IMR-90 (cell line): ENCODE measurements at regions of chr2 and their contacts with region 1.

Region 1: GRCh38 chr2:120680136-120680761 is 55.4 kb upstream of the GLI2 start:
- DNase-seq: peak; percentile 88
- ATAC-seq: peak; percentile 67
- H3K4me3 ChIP-seq: no peak overlapping the region
- H3K27ac ChIP-seq: no peak overlapping the region
- H3K4me1 ChIP-seq: peaks cover 18% of the 10 kb centered on the region
- H3K27me3 ChIP-seq: peaks cover 12% of the 10 kb centered on the region
- CTCF ChIP-seq: peak; percentile 78
- POLR2A ChIP-seq: peak; percentile 40; the same call in 1 of the 2 replicates
- RAD21 ChIP-seq: peak; percentile 92

Region 2: DNA sequence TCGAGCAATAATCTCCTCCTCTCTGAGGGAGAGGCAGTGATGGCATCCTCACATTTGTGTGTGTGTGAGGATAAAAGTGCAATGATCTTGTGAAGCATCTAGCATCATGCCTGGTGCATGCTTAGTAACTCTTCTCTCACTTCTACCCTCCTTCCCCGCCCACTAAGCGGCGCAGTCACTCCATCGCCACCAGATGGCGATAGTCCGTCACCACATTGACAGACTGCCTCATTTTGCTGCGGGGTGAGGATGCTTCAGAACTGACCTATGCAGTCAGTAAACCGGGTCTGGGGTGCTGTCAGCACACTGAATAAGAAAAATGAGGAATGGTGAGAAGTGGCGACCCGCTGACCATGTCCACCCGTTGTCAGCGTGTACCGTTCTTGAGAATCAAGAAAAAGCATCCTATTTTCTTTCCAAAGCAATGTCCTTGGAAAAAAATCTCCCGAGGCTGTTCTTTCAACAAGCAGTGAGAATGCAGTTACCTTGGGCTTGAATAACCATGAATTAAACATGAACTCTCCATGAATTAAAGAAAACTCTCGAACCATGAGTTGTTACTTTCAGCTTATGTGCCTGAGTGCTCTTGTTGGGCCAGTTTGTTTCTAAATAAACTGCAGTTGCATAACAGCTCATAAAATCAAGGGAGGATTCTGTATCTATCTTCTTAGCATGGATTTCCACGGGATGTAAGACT is 1038.5 kb before region 1 on chr2:
- CTCF ChIA-PET with region 1: no interaction called
- POLR2A ChIA-PET with region 1: interaction called, 9 read pairs
- dilution Hi-C with region 1: no loop called
- in situ Hi-C with region 1: no loop called
- intact Hi-C with region 1: loop called (anchors 5 kb)
- DNase-seq: peak; percentile 71
- ATAC-seq: peak; percentile 96
- H3K4me3 ChIP-seq: no peak overlapping the region
- H3K27ac ChIP-seq: no peak overlapping the region
- H3K4me1 ChIP-seq: no peaks in the 10 kb centered on the region
- H3K27me3 ChIP-seq: peaks cover 21% of the 10 kb centered on the region
- CTCF ChIP-seq: peak; percentile 94
- POLR2A ChIP-seq: no peak
- RAD21 ChIP-seq: peak; percentile 86

Region 3: DNA sequence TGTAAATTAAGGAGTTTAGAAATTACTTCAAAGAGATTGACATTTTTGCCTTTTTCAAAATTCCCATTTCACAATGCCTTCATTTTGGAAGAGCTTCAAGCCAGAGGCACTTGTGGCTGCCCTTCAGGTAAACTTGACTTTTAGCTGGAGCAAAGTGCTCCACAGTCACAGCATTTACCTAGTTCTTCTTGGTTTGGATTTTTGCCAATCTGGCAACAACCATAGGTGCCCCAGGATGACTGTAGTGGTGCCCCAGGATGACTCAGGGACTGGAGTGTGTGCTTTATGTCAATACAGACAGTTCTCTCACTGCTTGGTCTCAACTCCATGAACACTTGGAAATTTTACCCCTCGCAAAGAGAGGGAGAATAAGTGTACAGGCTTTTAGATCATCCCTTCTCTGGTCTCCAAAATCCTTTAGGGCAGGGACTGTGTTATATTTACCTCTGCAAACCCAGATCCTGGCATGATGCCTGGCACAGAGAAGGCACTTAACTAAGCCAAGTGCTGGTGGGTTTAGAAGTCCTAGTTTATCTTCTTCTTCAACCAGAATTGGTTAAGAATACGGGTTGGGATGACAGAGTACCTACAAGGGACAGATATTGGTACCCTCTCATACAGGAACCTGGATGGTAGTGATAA is 935.8 kb before region 1 on chr2:
- CTCF ChIA-PET with region 1: no interaction called
- POLR2A ChIA-PET with region 1: no interaction called
- dilution Hi-C with region 1: no loop called
- in situ Hi-C with region 1: loop called (anchors 25 kb)
- intact Hi-C with region 1: no loop called
- DNase-seq: peak; percentile 18
- ATAC-seq: no peak
- H3K4me3 ChIP-seq: no peak overlapping the region
- H3K27ac ChIP-seq: no peak overlapping the region
- H3K4me1 ChIP-seq: peaks cover 1% of the 10 kb centered on the region
- H3K27me3 ChIP-seq: peaks cover 21% of the 10 kb centered on the region
- CTCF ChIP-seq: no peak
- POLR2A ChIP-seq: no peak
- RAD21 ChIP-seq: no peak

Region 4: DNA sequence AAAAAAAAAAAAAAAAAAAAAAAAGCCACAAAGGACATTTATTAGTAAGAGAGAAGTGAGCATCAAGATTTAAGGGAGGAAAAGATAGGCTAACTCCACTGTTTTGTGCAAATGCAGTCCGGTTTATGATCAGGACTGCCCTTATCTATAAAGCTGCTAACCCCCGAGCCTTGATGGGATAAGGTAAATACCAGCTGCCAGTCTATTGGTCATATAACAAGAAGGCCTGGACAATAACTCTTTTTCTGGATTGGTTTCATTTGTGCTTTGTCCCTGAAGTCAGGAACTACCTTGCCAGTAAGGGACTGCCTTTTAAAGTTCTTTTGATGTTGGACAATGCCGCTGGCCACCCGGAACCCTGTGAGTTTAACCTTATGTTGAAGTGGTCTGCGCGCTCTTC is 905.1 kb before region 1 on chr2:
- CTCF ChIA-PET with region 1: no interaction called
- POLR2A ChIA-PET with region 1: interaction called, 11 read pairs
- dilution Hi-C with region 1: no loop called
- in situ Hi-C with region 1: no loop called
- intact Hi-C with region 1: no loop called
- DNase-seq: no peak
- ATAC-seq: no peak
- H3K4me3 ChIP-seq: no peak overlapping the region
- H3K27ac ChIP-seq: no peak overlapping the region
- H3K4me1 ChIP-seq: 0 out of 2 replicates have a peak, but pooled peaks cover 1% of the 10 kb centered on the region
- H3K27me3 ChIP-seq: no peaks in the 10 kb centered on the region
- CTCF ChIP-seq: no peak
- POLR2A ChIP-seq: no peak
- RAD21 ChIP-seq: no peak

Region 5: DNA sequence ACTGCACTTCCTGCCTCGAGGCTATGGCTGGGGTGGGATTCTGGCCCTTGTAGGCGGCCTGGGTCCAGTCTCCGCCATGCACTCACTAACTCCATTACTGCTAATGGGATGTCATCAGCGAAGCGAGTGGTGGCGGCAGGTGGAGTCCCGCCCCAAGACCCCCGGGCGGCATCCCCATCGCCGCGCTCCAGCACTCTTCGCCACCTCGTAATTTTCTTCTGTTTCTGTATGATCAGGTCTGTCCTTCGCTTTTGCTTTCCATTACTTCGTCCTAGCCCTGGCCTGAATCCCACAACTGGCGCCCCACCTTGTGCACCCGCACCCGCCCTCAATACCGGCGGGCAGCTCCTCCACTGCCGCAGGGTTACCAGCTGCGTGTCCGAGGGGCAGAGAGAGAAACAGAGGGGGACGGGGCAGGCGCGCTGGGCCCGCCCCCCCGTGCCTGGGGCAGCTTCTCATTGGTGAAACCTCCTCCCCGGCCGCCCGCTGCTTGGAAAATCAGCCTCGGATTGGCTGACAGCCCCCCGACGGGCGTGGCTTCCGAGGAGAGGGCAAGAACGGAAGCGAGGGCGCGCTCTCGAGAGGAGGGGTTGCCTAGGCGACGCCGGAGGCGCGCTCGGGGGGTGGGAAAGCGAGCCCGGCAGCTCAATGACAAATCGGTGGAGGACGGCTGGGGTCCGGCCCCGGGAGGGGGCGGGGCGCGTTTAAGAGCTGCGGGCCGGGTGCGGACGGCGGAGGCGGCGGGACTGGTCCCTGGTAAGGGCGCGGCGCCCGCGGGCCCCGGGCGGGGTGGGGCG is 427.8 kb before region 1 on chr2 and contains the start of gene RALB:
- CTCF ChIA-PET with region 1: interaction called, 3 read pairs
- POLR2A ChIA-PET with region 1: no interaction called
- dilution Hi-C with region 1: no loop called
- in situ Hi-C with region 1: no loop called
- intact Hi-C with region 1: loop called (anchors 5 kb)
- DNase-seq: peak; percentile 97
- ATAC-seq: peak; percentile 94
- H3K4me3 ChIP-seq: peak within 1 kb of the TSS; percentile 74
- H3K27ac ChIP-seq: peak within 1 kb of the TSS; percentile 80
- H3K4me1 ChIP-seq: peaks cover 5% of the 10 kb centered on the region; the same call in 1 of the 2 replicates
- H3K27me3 ChIP-seq: peaks cover 11% of the 10 kb centered on the region; the same call in 1 of the 2 replicates
- CTCF ChIP-seq: no peak
- POLR2A ChIP-seq: peak; percentile 54
- RAD21 ChIP-seq: no peak
- total RNA-seq, gene RALB: 53.6 and 75.3 TPM in 2 replicates

Region 6: GRCh38 chr2:120343433-120344105 is 336.7 kb before region 1 on chr2:
- CTCF ChIA-PET with region 1: interaction called, 34 read pairs
- POLR2A ChIA-PET with region 1: no interaction called
- dilution Hi-C with region 1: no loop called
- in situ Hi-C with region 1: loop called (anchors 5 kb)
- intact Hi-C with region 1: loop called (anchors 1 kb)
- DNase-seq: peak; percentile 68
- ATAC-seq: peak; percentile 84
- H3K4me3 ChIP-seq: no peak overlapping the region
- H3K27ac ChIP-seq: no peak overlapping the region
- H3K4me1 ChIP-seq: peaks cover 6% of the 10 kb centered on the region; the same call in 1 of the 2 replicates
- H3K27me3 ChIP-seq: peaks cover 90% of the 10 kb centered on the region
- CTCF ChIP-seq: peak; percentile 92
- POLR2A ChIP-seq: no peak
- RAD21 ChIP-seq: peak; percentile 97

Region 7: DNA sequence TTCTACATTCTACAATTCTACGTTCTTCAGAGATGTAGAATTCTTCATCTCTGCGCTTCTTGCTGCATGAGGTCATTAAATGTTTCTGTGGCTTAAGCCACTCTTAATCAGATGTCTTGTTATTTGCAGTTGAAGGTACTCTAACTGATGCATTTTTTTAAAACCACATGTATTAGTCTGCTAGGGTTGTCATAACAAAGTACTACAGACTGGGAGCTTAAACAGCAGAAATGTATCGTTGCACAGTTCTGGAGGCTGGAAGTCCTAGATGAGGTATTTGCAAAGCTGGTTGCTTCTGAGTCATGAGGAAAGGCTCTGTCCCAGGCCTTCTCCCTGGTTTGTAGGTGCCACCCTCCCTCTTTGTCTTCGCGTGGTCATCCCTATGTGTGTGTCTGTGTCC is 120.8 kb before region 1 on chr2:
- CTCF ChIA-PET with region 1: no interaction called
- POLR2A ChIA-PET with region 1: no interaction called
- dilution Hi-C with region 1: no loop called
- in situ Hi-C with region 1: no loop called
- intact Hi-C with region 1: loop called (anchors 5 kb)
- DNase-seq: peak; percentile 100
- ATAC-seq: peak; percentile 96
- H3K4me3 ChIP-seq: no peak overlapping the region
- H3K27ac ChIP-seq: peak overlapping the region; percentile 99
- H3K4me1 ChIP-seq: peaks cover 33% of the 10 kb centered on the region
- H3K27me3 ChIP-seq: peaks cover under 1% of the 10 kb centered on the region; the same call in 1 of the 2 replicates
- CTCF ChIP-seq: no peak
- POLR2A ChIP-seq: no peak
- RAD21 ChIP-seq: peak; percentile 24; the same call in 1 of the 2 replicates

Region 8: GRCh38 chr2:120703330-120703994 is 23.2 kb after region 1 on chr2:
- CTCF ChIA-PET with region 1: no interaction called
- POLR2A ChIA-PET with region 1: no interaction called
- dilution Hi-C with region 1: no loop called
- in situ Hi-C with region 1: no loop called
- intact Hi-C with region 1: no loop called
- DNase-seq: peak; percentile 91
- ATAC-seq: peak; percentile 93
- H3K4me3 ChIP-seq: no peak overlapping the region
- H3K27ac ChIP-seq: peak overlapping the region; percentile 44; the same call in 1 of the 2 replicates
- H3K4me1 ChIP-seq: peaks cover 4% of the 10 kb centered on the region
- H3K27me3 ChIP-seq: no peaks in the 10 kb centered on the region
- CTCF ChIP-seq: no peak
- POLR2A ChIP-seq: no peak
- RAD21 ChIP-seq: no peak

Region 9: DNA sequence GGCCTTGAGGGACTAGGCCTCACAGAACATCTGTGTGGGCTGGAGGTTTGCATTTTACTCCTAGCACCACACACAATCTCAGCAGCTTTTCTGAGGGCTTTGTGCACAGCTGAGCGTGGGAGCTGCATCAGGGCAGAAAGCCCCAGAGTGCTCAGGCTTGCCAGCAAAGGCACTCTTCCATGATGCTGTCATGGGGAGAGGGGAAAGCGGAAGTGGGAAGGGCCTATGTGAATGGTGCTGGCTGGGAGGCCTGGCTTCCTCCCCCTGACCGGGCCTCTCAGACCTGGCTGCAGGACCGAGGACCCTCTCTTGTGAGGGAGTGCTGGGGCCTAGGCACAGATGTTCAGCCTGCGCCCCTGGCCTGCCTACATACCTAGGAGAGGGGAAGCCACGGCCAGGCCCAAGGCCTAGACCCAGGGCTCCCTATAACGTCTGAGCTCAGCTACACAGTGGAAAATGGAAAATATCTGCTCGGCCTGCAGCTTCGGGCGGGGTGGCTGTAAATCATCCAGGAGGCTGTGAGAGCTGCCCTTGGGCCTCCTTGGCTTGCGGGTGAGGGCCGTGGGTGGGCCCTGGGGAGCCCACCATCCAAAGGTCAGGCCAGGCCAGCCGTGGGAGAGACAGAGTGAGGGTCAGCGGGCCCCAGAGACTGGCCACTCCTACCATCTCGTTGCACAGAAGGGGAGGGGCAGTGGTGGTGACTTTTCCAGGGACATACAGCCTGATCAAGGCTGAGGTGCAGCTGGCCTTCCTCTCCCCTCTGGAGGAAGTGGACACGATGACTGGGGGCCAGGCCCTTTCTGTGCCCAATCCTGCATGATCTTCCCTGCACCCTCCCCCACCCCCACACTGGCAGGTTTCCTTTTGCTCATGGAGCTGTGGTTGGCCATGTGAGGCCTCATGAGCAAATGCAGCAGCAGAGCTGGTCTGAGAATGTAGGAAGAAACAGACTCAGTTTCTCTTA is 78.2 kb after region 1 on chr2:
- CTCF ChIA-PET with region 1: no interaction called
- POLR2A ChIA-PET with region 1: no interaction called
- dilution Hi-C with region 1: no loop called
- in situ Hi-C with region 1: no loop called
- intact Hi-C with region 1: no loop called
- DNase-seq: peak; percentile 92
- ATAC-seq: peak; percentile 90
- H3K4me3 ChIP-seq: no peak overlapping the region
- H3K27ac ChIP-seq: peak overlapping the region; percentile 88
- H3K4me1 ChIP-seq: peaks cover 49% of the 10 kb centered on the region
- H3K27me3 ChIP-seq: no peaks in the 10 kb centered on the region
- CTCF ChIP-seq: no peak
- POLR2A ChIP-seq: peak; percentile 53; the same call in 1 of the 2 replicates
- RAD21 ChIP-seq: no peak